ENCODE measurements at regions of chr18 and their contacts with region 1.

Region 1: GRCh38 chr18:46148810-46149209 is 44.6 kb downstream of the HAUS1 start:
- DNase-seq: peak; percentile 42
- H3K4me3 ChIP-seq: no peak overlapping the region
- H3K27ac ChIP-seq: no peak overlapping the region
- H3K4me1 ChIP-seq: no peaks in the 10 kb centered on the region
- H3K27me3 ChIP-seq: no peaks in the 10 kb centered on the region
- CTCF ChIP-seq: peak; percentile 69

Region 2: DNA sequence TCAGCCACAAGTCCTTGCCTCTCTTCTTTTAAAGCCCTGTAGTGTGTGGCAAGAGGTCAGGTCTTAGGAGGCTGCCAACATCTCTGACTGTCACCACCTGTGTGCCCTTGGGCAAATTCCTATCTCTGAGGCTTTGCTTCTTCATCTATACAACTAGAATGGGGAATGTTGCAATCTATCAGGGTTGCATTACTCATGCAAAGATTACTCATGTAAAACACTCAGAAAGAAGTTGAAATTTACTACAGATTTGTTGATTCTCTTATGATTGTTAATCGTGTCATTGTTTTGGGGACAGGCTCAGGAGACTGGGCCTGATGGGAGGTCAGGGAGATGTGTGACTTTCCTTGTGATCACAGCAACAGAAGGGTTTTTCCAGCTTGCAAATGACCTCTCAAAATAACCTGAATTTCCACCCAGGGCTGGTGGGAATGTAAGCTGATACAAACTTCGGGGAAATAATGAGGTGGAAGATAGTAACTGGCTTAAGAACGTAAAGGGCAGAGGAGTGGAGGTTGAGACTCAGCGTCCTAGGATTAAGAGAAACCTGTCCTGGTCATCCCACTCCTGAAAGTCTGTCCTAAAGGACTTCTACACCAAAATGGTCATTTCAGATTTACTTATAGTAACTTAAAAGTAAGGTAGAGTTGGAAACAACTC is 355.4 kb before region 1 on chr18:
- intact Hi-C with region 1: no loop called
- DNase-seq: no peak
- H3K4me3 ChIP-seq: no peak overlapping the region
- H3K27ac ChIP-seq: no peak overlapping the region
- H3K4me1 ChIP-seq: no peaks in the 10 kb centered on the region
- H3K27me3 ChIP-seq: no peaks in the 10 kb centered on the region
- CTCF ChIP-seq: no peak

Region 3: GRCh38 chr18:46278465-46279151 is 129.8 kb after region 1 on chr18:
- intact Hi-C with region 1: no loop called
- DNase-seq: no peak
- H3K4me3 ChIP-seq: no peak overlapping the region
- H3K27ac ChIP-seq: no peak overlapping the region
- H3K4me1 ChIP-seq: no peaks in the 10 kb centered on the region
- H3K27me3 ChIP-seq: no peaks in the 10 kb centered on the region
- CTCF ChIP-seq: no peak

Region 4: DNA sequence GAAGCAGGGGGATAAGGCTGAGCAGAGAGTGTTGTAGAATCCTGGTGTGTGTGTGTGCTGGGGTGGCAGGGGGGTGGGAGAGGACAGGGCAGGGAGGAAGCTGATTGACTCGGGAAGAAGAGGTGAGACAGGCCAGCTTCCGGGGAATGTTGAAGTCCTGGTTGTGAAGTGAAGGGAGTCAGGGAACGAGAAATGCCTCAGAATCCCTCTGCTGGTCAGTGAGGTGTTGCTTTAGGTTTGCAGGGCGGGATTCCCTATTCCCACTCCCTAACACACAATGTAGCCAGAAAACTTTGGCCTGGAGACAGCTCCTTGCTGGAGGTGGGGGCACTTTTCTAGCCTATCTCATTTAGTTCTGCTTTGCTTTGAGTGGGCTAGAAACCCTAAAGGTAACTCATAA is 220.5 kb after region 1 on chr18:
- intact Hi-C with region 1: no loop called
- DNase-seq: no peak
- H3K4me3 ChIP-seq: no peak overlapping the region
- H3K27ac ChIP-seq: no peak overlapping the region
- H3K4me1 ChIP-seq: no peaks in the 10 kb centered on the region
- H3K27me3 ChIP-seq: no peaks in the 10 kb centered on the region
- CTCF ChIP-seq: no peak

Region 5: DNA sequence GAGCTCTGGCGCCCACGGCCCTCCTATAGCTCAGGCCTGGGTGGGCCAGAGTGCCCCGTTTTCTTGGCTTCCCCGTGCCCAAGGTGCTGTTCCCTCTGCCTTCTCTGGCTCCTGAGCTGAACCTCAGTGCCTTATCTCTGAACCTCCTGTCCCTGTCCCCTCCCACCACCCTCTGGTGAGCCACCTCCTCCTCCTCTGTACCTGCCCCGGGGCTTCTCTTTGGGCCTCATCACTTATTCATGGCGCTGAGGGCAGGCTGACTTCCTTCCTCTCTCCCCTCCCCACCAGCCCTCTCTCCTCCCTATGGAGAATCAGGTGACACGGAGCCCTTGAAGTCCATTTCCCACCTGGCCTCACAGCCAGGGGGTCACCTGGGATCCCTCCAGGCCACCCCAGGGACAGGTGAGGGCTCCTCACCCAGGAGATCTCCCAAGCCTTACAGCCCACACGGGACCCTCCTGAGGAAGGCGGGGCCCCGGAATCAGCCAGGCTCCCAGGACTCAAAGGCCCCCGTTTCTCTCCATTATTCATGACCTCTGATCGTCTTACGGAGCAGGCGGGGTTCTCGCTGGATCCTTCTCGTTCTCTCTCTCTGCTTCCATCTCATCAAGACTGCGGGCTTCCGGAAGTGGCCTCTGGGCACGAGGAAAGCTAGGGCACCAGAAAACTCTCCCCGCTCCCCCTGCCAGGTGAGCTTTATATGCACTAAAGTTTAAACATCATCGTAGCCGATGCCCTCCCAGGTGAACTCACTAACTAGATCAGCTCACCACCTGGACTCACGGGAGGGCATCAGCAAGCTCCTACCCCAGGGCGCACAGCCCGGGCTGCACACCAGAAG is 508.5 kb after region 1 on chr18 and contains the start of gene LOXHD1:
- intact Hi-C with region 1: loop called (anchors 5 kb)
- DNase-seq: no peak
- H3K4me3 ChIP-seq: no peak within 1 kb of the TSS
- H3K27ac ChIP-seq: no peak within 1 kb of the TSS
- H3K4me1 ChIP-seq: no peaks in the 10 kb centered on the region
- H3K27me3 ChIP-seq: no peaks in the 10 kb centered on the region
- CTCF ChIP-seq: no peak
- total RNA-seq, gene LOXHD1: not detected

Region 6: GRCh38 chr18:47313901-47314300 is 1165.1 kb after region 1 on chr18:
- intact Hi-C with region 1: no loop called
- DNase-seq: no peak
- H3K4me3 ChIP-seq: no peak overlapping the region
- H3K27ac ChIP-seq: no peak overlapping the region
- H3K4me1 ChIP-seq: no peaks in the 10 kb centered on the region
- H3K27me3 ChIP-seq: no peaks in the 10 kb centered on the region
- CTCF ChIP-seq: no peak

Measured in colonic mucosa (tissue), 4 donors.